Cardiac septum (tissue), 1 donor: ENCODE measurements at regions of chr19 and their contacts with region 1.

Region 1: GRCh38 chr19:53158119-53158656 is 665 bp downstream of the ZNF347 start:
- DNase-seq: no peak

Region 2: GRCh38 chr19:53076977-53077376 is 81.2 kb before region 1 on chr19:
- intact Hi-C with region 1: loop called (anchors 10 kb)
- DNase-seq: no peak

Region 3: GRCh38 chr19:53132141-53132991 is 25.8 kb before region 1 on chr19 and contains the start of gene ZNF415:
- intact Hi-C with region 1: loop called (anchors 1 kb)
- DNase-seq: peak; percentile 93
- total RNA-seq, gene ZNF415: 20.9 TPM